Pancreas (tissue), 10 donors: ENCODE measurements at regions of chrX and their contacts with region 1.

Region 1: DNA sequence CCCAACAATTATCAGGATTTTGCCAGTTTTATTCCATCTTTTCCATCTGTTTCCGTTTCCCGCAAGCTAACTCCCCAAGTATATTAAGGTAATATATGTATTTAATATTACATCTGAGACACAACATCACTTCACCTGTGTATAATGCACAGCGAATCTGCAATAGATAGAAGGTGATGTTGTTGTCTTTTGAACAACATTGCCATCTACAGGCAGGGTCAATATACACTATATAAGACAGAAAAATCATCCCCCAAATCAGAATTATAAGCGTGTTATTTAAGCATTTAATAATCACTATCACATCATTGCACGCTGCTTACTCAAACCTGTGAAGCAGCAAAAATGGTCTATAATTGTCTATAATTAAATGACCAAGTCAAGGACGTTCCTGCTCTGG is 1115.5 kb downstream of the NLGN4X start:
- DNase-seq: no peak
- ATAC-seq: peak; percentile 53 to 73 (median 62)
- H3K4me3 ChIP-seq: no peak overlapping the region
- H3K27ac ChIP-seq: no peak overlapping the region
- H3K4me1 ChIP-seq: no peaks in the 10 kb centered on the region
- H3K27me3 ChIP-seq: no peaks in the 10 kb centered on the region
- CTCF ChIP-seq: peak in 2 of 4 donors; percentile 26 to 31

Region 2: GRCh38 chrX:4173743-4174142 is 939.4 kb before region 1 on chrX:
- intact Hi-C with region 1: no loop called
- DNase-seq: no peak
- ATAC-seq: no peak
- H3K4me3 ChIP-seq: no peak overlapping the region
- H3K27ac ChIP-seq: no peak overlapping the region
- H3K4me1 ChIP-seq: no peaks in the 10 kb centered on the region
- H3K27me3 ChIP-seq: peaks cover 0 to 5% (median 2%) of the 10 kb centered on the region in 4 donors
- CTCF ChIP-seq: no peak

Region 3: GRCh38 chrX:4373791-4374190 is 739.3 kb before region 1 on chrX:
- intact Hi-C with region 1: no loop called
- DNase-seq: no peak
- ATAC-seq: no peak
- H3K4me3 ChIP-seq: no peak overlapping the region
- H3K27ac ChIP-seq: no peak overlapping the region
- H3K4me1 ChIP-seq: no peaks in the 10 kb centered on the region
- H3K27me3 ChIP-seq: no peaks in the 10 kb centered on the region
- CTCF ChIP-seq: no peak

Region 4: DNA sequence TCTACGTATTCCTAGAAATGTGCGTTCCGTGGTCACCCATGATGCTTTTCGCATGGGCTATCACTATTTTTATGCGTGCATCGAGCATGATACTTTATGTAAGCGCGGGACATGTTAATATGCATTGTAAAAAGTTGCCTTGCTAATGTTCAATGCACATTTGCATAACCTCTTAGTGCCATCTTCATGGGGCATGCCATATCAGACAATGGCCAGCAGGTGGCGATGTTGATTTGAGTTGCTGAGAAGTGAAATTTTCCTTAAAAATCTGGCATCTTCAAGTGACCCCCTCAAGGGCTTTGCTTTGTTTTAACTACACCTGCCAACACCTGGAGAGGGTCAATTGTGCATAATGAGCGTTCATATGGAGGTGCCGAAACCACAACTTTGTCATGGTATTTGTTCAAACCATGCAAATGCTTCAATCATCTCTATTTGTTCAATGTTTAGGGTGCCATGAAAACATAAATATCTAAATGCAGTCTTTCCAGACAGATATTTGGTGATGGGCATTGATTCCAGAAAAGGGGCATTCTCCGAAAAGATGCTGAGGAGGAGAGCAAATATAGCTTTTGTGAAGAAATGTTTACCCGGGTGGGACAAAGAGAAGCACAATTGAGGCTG is 565.8 kb before region 1 on chrX:
- intact Hi-C with region 1: loop called in 2 of 3 experiments (anchors 5 kb)
- DNase-seq: peak in 5 of 6 donors; percentile 3 to 74 (median 48)
- ATAC-seq: peak; percentile 56 to 80 (median 64)
- H3K4me3 ChIP-seq: no peak overlapping the region
- H3K27ac ChIP-seq: no peak overlapping the region
- H3K4me1 ChIP-seq: no peaks in the 10 kb centered on the region
- H3K27me3 ChIP-seq: no peaks in the 10 kb centered on the region
- CTCF ChIP-seq: peak; percentile 92 to 96 (median 94)